ENCODE measurements at regions of chr6 and their contacts with region 1.

Region 1: GRCh38 chr6:33633462-33634158 is 12.5 kb downstream of the ITPR3 start:
- DNase-seq: peak; percentile 33 to 35
- ATAC-seq: peak; percentile 83 to 88
- H3K4me3 ChIP-seq: peak overlapping the region; percentile 46
- H3K27ac ChIP-seq: peak overlapping the region; percentile 54 to 92
- H3K4me1 ChIP-seq: peaks cover 33% of the 10 kb centered on the region
- CTCF ChIP-seq: no peak
- EP300 ChIP-seq: no peak
- POLR2A ChIP-seq: no peak
- RAD21 ChIP-seq: no peak

Region 2: DNA sequence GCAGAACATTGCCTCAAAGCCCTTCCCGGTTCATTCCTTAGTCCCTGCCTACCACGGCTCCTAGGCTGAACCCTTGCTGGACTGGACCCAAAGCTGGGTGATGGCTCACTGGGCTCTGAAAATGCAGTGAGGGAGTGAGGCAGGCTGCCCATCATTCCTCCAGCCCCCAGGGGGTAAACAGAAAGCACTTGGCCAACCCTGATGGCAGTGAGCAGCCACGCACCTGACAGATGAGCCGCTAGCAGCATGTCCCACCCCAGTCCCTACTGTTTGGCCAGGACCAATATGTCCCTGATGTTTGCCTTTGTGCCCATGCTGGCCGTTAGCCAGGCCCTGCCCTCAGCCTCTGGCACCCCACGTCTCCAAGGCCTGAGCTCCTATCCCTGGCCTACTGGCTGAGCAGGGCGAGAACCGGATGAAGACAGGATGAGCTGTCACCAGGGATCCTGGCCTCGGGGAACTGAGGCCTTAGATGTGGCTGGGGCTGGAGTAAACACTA is 34.1 kb before region 1 on chr6:
- CTCF ChIA-PET with region 1: interaction called, 12 read pairs
- POLR2A ChIA-PET with region 1: no interaction called
- DNase-seq: peak in 1 of 2 experiments; percentile 20
- ATAC-seq: peak; percentile 71 to 75
- H3K4me3 ChIP-seq: no peak overlapping the region
- H3K27ac ChIP-seq: peak overlapping the region; percentile 65 to 71
- H3K4me1 ChIP-seq: peaks cover 23% of the 10 kb centered on the region
- CTCF ChIP-seq: no peak
- EP300 ChIP-seq: no peak
- POLR2A ChIP-seq: no peak
- RAD21 ChIP-seq: no peak

Region 3: DNA sequence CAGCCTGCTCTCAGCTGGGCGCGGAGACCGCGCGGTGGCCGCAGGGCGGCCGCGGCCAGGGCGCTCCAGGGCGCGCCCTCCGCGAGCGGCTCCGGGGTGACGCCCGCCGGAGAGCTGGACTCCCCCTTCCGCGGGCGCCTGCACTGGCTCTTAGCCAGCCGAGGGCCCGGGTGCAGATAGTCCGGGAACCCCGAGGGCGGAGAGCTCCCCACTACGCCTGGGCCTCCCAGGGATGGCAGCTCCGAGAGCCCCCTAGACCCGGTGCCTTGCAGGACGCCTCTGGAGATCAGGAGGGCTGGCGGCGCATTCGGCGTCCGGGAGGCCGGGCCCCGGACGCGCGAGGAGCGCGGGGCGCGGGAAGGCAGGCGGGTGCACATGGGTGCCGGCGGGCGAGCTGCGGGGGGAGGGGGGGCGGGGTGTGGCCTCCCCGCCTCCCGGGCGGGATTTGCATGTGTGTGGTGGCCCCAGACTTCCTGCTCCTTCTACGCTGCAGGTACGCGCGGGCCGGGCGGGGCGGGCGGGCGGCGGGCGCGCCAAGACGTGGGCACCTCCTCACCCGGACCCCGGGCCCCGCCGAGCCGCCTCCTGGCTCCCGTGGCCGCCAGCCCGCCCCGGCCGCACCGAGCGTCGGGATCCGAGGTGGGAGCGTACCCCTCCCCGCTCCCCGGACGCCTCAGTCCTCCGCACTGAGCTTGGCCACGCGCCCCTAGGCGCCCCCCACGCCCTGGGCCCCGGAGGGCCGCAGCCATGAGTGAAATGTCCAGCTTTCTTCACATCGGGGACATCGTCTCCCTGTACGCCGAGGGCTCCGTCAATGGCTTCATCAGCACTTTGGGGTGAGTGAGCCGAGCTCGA is 12.5 kb before region 1 on chr6 and contains the start of gene ITPR3:
- CTCF ChIA-PET with region 1: interaction called, 13 read pairs
- POLR2A ChIA-PET with region 1: no interaction called
- DNase-seq: peak; percentile 66 to 72
- ATAC-seq: peak; percentile 71 to 76
- H3K4me3 ChIP-seq: peak within 1 kb of the TSS; percentile 80
- H3K27ac ChIP-seq: peak within 1 kb of the TSS; percentile 87 to 99
- H3K4me1 ChIP-seq: peaks cover 30% of the 10 kb centered on the region
- CTCF ChIP-seq: no peak
- EP300 ChIP-seq: no peak
- POLR2A ChIP-seq: no peak; the same call in 1 of the 2 replicates
- RAD21 ChIP-seq: no peak
- polyA plus RNA-seq, gene ITPR3: 17.6 and 19.1 TPM in 2 replicates

Region 4: DNA sequence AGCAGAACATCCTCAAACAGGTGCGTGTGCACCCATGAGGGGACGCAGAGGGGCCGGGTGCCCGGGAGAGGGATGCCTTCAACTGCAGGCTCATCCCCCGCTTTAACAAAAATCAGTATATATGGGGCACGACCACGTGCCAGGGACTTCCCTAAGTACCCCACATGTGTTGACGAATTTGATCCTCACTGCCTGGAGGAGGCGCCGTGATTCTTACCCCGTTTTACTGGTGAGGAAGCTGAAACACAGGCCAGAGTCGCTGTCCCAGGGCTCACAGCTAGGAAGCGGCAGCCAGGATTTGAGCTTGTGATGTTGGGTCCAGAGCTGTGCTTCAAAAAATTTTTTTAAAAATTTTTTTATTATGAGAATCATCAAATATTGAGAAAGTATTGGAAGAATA is 32.3 kb after region 1 on chr6:
- CTCF ChIA-PET with region 1: no interaction called
- POLR2A ChIA-PET with region 1: no interaction called
- DNase-seq: no peak
- ATAC-seq: no peak
- H3K4me3 ChIP-seq: no peak overlapping the region
- H3K27ac ChIP-seq: no peak overlapping the region
- H3K4me1 ChIP-seq: peaks cover 11% of the 10 kb centered on the region; the same call in 2 of the 3 replicates
- CTCF ChIP-seq: no peak
- EP300 ChIP-seq: no peak
- POLR2A ChIP-seq: no peak
- RAD21 ChIP-seq: no peak

Measured in A549 (cell line).